Sigmoid colon (tissue), 7 donors: ENCODE measurements at regions of chr1 and their contacts with region 1.

Region 1: GRCh38 chr1:196933531-196934189 is 9.9 kb upstream of the CFHR2 start:
- DNase-seq: no peak
- H3K4me3 ChIP-seq: no peak overlapping the region
- H3K27ac ChIP-seq: no peak overlapping the region
- H3K4me1 ChIP-seq: no peaks in the 10 kb centered on the region
- H3K27me3 ChIP-seq: no peaks in the 10 kb centered on the region
- CTCF ChIP-seq: no peak
- EP300 ChIP-seq: no peak
- POLR2A ChIP-seq: no peak

Region 2: GRCh38 chr1:196797891-196798290 is 135.8 kb before region 1 on chr1:
- intact Hi-C with region 1: loop called (anchors 10 kb)
- DNase-seq: no peak
- H3K4me3 ChIP-seq: no peak overlapping the region
- H3K27ac ChIP-seq: no peak overlapping the region
- H3K4me1 ChIP-seq: no peaks in the 10 kb centered on the region
- H3K27me3 ChIP-seq: no peaks in the 10 kb centered on the region
- CTCF ChIP-seq: no peak
- EP300 ChIP-seq: no peak
- POLR2A ChIP-seq: no peak